Ascending aorta (tissue), 2 donors: ENCODE measurements at regions of chr3 and their contacts with region 1.

Region 1: GRCh38 chr3:186940967-186941366 is 10.6 kb downstream of the ST6GAL1 start:
- DNase-seq: peak; percentile 59 to 89
- H3K4me3 ChIP-seq: no peak overlapping the region
- H3K27ac ChIP-seq: peak overlapping the region; percentile 64 to 79
- H3K4me1 ChIP-seq: peaks cover 9 to 35% of the 10 kb centered on the region in 2 donors
- H3K27me3 ChIP-seq: no peaks in the 10 kb centered on the region
- CTCF ChIP-seq: no peak

Region 2: GRCh38 chr3:186708983-186709679 is 231.8 kb before region 1 on chr3:
- intact Hi-C with region 1: no loop called
- DNase-seq: no peak
- H3K4me3 ChIP-seq: no peak overlapping the region
- H3K27ac ChIP-seq: no peak overlapping the region
- H3K4me1 ChIP-seq: no peaks in the 10 kb centered on the region
- H3K27me3 ChIP-seq: no peaks in the 10 kb centered on the region
- CTCF ChIP-seq: no peak

Region 3: DNA sequence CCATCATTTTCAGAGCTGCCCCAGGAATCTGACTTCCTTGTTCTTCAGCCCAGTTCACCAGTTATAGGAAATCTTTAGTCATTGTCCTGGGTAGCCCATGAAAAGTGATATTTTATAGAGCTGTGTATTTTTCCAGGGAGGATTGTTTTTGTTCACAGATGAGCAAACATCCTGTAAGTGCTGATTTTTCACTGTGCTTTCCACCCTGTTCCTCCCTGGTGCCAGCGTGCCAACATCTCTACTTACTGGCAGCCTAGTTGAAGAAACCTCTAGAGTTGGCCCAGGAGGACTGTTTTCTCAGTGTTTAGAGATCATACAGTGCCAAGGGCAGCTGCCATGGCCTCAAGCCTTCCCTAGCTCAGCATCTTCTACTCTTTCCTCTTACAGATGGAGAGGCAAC is 30.6 kb after region 1 on chr3:
- intact Hi-C with region 1: loop called (anchors 2 kb)
- DNase-seq: peak; percentile 50 to 92
- H3K4me3 ChIP-seq: no peak overlapping the region
- H3K27ac ChIP-seq: peak overlapping the region; percentile 87 to 88
- H3K4me1 ChIP-seq: peaks cover 36 to 85% of the 10 kb centered on the region in 2 donors
- H3K27me3 ChIP-seq: no peaks in the 10 kb centered on the region
- CTCF ChIP-seq: no peak

Region 4: DNA sequence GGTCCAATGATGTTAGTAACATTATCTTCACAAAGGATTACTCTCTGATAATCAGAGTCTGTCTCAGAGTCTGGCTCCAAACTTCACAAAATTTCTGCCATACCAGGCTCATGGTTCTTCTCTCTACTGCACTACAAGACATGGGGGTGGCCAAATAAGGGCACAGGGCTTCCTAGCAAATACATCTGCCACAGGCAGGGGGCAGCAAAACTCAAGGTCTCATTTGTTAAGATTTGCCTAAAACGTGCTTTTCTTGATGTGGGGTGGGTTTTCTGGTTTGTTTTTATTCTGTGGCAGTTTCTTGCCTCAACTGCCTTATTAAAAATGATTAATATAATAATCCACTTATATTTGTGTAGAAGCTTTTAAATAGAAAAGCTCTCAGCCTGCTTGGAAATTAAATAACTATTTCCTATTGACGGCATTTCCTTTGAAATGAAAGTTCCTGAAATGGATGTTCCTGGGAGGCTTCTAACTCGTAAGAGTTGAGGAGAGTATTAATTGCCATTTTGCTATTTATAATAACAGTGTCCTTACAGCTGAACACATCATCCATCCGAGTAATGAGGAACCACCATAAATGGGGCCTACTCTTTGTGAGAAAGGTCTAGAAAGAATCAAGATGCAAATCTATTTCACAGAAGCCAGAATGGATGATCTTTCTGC is 675.5 kb after region 1 on chr3:
- intact Hi-C with region 1: no loop called
- DNase-seq: no peak
- H3K4me3 ChIP-seq: no peak overlapping the region
- H3K27ac ChIP-seq: no peak overlapping the region
- H3K4me1 ChIP-seq: no peaks in the 10 kb centered on the region
- H3K27me3 ChIP-seq: no peaks in the 10 kb centered on the region
- CTCF ChIP-seq: peak; percentile 17 to 51 (median 29)